Mammary epithelial cell (primary cell): ENCODE measurements at regions of chr14 and their contacts with region 1.

Region 1: DNA sequence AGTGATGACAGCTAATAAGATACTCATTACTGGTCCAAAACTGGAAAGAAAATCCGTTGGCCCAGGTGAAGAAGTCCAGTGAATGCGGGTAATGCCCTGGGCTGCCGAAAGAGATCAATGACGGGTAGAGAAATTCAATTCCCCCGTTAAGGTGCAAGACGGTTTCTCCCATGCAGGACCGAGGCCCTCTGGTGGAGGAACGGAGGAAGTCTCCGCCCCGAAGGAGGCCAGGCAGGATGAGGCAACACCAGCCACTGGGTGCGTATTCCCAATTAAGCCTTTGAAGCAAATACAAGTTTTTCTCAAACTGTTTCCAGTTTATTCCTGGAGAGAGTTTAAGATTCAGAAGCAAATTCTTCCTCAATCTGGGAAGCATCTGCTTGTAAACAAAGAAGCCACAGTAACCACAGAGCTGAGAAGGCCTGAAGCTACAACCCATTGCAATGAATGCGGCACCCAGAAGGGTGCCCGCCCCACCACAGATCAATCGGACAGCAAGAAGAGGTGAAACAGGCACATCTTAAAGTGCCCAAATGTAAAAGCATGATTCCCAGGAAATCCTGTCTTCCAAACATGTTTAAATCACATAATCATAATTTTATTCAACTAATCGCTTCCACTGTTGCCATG is 118.5 kb downstream of the TTC7B start:
- DNase-seq: peak; percentile 62
- H3K4me3 ChIP-seq: no peak overlapping the region
- H3K27ac ChIP-seq: no peak overlapping the region
- H3K4me1 ChIP-seq: no peaks in the 10 kb centered on the region
- H3K27me3 ChIP-seq: no peaks in the 10 kb centered on the region
- CTCF ChIP-seq: peak; percentile 94 to 95

Region 2: GRCh38 chr14:90193925-90194324 is 503.8 kb before region 1 on chr14:
- CTCF ChIA-PET with region 1: no interaction called
- dilution Hi-C with region 1: no loop called
- in situ Hi-C with region 1: no loop called
- intact Hi-C with region 1: no loop called
- DNase-seq: no peak
- H3K4me3 ChIP-seq: no peak overlapping the region
- H3K27ac ChIP-seq: no peak overlapping the region
- H3K4me1 ChIP-seq: no peaks in the 10 kb centered on the region
- H3K27me3 ChIP-seq: peaks cover 3% of the 10 kb centered on the region
- CTCF ChIP-seq: peak in 1 of 2 donors; percentile 29

Region 3: DNA sequence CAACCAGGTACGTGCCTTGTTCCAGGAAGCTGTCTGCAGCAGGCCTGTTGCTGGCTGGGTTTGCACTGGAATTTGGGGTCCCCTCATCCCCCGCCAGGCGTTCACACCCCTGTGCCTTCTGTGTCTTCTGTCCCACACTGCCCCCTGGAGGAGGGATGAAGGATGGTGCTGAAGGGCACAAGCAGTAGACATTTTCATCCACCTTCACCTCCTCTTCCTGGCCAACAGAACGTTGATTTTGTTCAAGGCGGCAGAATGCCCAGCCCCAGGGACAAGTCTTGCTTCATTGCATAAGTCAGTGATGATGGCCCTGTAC is 178.8 kb before region 1 on chr14:
- CTCF ChIA-PET with region 1: no interaction called
- dilution Hi-C with region 1: no loop called
- in situ Hi-C with region 1: no loop called
- intact Hi-C with region 1: loop called (anchors 2 kb)
- DNase-seq: no peak
- H3K4me3 ChIP-seq: no peak overlapping the region
- H3K27ac ChIP-seq: no peak overlapping the region
- H3K4me1 ChIP-seq: peaks cover 17% of the 10 kb centered on the region
- H3K27me3 ChIP-seq: no peaks in the 10 kb centered on the region
- CTCF ChIP-seq: peak; percentile 46 to 62